ENCODE measurements at regions of chr6 and their contacts with region 1.

Region 1: GRCh38 chr6:7389451-7390225 is at the starts of genes CAGE1 and RIOK1:
- DNase-seq: peak; percentile 97
- ATAC-seq: peak; percentile 100
- total RNA-seq, gene CAGE1: 0.06 TPM in 1 of 2 donors, not detected in the other
- total RNA-seq, gene RIOK1: 10.0 to 16.4 TPM

Region 2: DNA sequence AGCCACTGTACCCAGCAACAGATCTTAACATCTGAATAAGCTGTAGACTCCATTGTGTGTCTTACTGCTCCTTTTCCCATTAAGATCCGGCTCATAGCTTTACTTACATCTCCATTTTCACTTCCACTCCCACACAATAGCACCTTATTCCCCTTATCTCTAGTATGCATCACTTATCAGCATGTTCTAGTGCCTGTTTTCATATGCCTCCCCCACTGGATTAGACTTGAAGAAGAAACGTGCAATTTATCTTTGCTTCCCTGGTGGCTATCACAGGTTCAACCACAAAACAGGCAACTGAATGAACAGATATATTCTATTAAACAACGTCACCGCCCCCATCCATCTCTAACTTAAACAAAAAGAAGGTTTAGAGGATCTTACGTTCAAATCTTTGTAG is 88.7 kb before region 1 on chr6:
- intact Hi-C with region 1: loop called in 1 of 2 experiments (anchors 10 kb)
- DNase-seq: no peak
- ATAC-seq: no peak

Region 3: GRCh38 chr6:7312616-7313504 is 76.8 kb before region 1 on chr6 and contains the start of gene SSR1:
- intact Hi-C with region 1: loop called (anchors 2 to 10 kb)
- DNase-seq: peak; percentile 98
- ATAC-seq: peak; percentile 100
- total RNA-seq, gene SSR1: 84.0 to 98.6 TPM

Measured in left cardiac atrium (tissue), 4 donors.